ENCODE measurements at regions of chr5 and their contacts with region 1.

Region 1: GRCh38 chr5:64612344-64612961 is 77.8 kb upstream of the SHISAL2B start:
- DNase-seq: no peak
- ATAC-seq: peak; percentile 60

Region 2: GRCh38 chr5:64229163-64229774 is 383.2 kb before region 1 on chr5:
- intact Hi-C with region 1: loop called (anchors 2 kb)
- DNase-seq: no peak
- ATAC-seq: no peak

Region 3: DNA sequence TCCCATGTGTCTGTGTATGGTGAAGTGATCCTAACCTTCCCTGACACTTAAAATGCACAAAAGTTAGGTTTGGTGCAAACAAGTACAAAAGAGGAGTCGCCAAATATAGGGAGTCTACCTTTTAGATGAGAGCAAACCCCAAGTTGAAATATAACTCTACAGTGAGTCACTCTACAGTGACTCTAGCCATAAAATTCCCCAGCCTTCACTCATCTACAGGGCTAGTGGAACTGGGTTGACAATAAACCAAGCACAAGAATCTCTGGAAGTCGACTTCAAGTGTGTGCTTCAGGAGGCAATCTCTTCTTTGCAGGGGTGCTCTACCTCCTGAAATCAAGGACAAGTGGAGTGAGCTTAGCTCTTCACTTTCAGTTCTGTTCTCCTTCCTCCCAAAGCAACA is 81.2 kb after region 1 on chr5:
- intact Hi-C with region 1: no loop called
- DNase-seq: no peak
- ATAC-seq: no peak

Measured in Right ventricle myocardium inferior (tissue), 1 donor.